ENCODE measurements at regions of chr19 and their contacts with region 1.

Region 1: GRCh38 chr19:24033301-24033962 is 53.6 kb upstream of the ZNF254 start:
- DNase-seq: peak; percentile 84
- ATAC-seq: peak; percentile 98
- H3K4me3 ChIP-seq: peak overlapping the region; percentile 78 to 99 (median 93)
- H3K4me3 Mint-ChIP-seq: peak overlapping the region; percentile 99
- H3K27ac ChIP-seq: peak overlapping the region; percentile 85 to 89
- H3K27ac Mint-ChIP-seq: peak overlapping the region; percentile 98
- H3K4me1 ChIP-seq: peaks cover 24 to 56% of the 10 kb centered on the region in 2 donors
- H3K4me1 Mint-ChIP-seq: peaks cover 35% of the 10 kb centered on the region
- H3K27me3 ChIP-seq: no peaks in the 10 kb centered on the region
- H3K27me3 Mint-ChIP-seq: no peaks in the 10 kb centered on the region
- CTCF ChIP-seq: no peak

Region 2: DNA sequence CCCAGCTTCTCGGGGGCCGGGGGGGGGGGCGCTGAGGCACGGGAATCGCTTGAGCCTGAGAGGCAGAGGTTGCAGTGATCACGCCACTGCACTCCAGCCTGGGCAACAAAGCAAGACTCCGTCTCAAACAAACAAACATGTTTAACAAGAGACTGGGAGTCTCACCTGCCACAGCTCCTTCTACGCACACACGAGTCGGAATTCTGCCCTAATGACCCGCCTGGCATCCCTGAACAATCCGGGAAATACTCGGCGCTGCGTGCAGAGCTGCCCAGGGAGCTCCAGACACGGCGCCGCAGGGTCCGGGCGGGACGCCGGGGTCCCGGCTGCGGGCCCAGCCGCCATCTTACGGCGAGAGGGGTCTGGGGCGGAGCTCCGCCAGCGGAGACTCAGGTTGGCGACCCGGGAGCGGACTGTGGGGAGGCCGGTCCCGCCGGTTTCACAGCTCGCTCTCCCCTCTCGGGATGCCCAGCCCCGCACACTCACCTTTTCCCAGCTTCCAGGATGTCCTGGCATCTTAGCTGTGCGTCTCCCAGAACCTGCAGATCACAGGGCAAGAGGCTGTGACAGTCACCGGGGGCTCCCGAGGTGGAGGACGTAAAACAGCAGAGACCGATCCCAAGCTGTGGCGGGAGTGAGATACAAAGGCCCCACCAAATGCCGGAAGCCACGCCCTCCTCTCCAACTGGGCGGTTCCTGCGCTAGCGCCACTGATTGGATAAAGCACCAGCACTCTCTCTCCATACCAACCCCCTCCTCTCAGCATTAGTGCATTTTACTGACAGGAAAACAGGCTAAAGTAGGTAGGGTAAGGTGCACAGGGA is 759.6 kb before region 1 on chr19:
- CTCF ChIA-PET with region 1: no interaction called
- POLR2A ChIA-PET with region 1: no interaction called
- intact Hi-C with region 1: loop called (anchors 5 kb)
- DNase-seq: peak; percentile 91
- ATAC-seq: peak; percentile 99
- H3K4me3 ChIP-seq: peak overlapping the region; percentile 81 to 99 (median 96)
- H3K4me3 Mint-ChIP-seq: peak overlapping the region; percentile 98
- H3K27ac ChIP-seq: peak overlapping the region; percentile 85 to 89
- H3K27ac Mint-ChIP-seq: peak overlapping the region; percentile 97
- H3K4me1 ChIP-seq: peaks cover 6 to 20% of the 10 kb centered on the region in 2 donors
- H3K4me1 Mint-ChIP-seq: peaks cover 30% of the 10 kb centered on the region
- H3K27me3 ChIP-seq: no peaks in the 10 kb centered on the region
- H3K27me3 Mint-ChIP-seq: no peaks in the 10 kb centered on the region
- CTCF ChIP-seq: no peak

Region 3: GRCh38 chr19:23887642-23888041 is 145.8 kb before region 1 on chr19:
- CTCF ChIA-PET with region 1: no interaction called
- POLR2A ChIA-PET with region 1: no interaction called
- intact Hi-C with region 1: no loop called
- DNase-seq: no peak
- ATAC-seq: no peak
- H3K4me3 ChIP-seq: no peak overlapping the region
- H3K4me3 Mint-ChIP-seq: no peak overlapping the region
- H3K27ac ChIP-seq: no peak overlapping the region
- H3K27ac Mint-ChIP-seq: no peak overlapping the region
- H3K4me1 ChIP-seq: no peaks in the 10 kb centered on the region
- H3K4me1 Mint-ChIP-seq: no peaks in the 10 kb centered on the region
- H3K27me3 ChIP-seq: no peaks in the 10 kb centered on the region
- H3K27me3 Mint-ChIP-seq: no peaks in the 10 kb centered on the region
- CTCF ChIP-seq: no peak

Region 4: DNA sequence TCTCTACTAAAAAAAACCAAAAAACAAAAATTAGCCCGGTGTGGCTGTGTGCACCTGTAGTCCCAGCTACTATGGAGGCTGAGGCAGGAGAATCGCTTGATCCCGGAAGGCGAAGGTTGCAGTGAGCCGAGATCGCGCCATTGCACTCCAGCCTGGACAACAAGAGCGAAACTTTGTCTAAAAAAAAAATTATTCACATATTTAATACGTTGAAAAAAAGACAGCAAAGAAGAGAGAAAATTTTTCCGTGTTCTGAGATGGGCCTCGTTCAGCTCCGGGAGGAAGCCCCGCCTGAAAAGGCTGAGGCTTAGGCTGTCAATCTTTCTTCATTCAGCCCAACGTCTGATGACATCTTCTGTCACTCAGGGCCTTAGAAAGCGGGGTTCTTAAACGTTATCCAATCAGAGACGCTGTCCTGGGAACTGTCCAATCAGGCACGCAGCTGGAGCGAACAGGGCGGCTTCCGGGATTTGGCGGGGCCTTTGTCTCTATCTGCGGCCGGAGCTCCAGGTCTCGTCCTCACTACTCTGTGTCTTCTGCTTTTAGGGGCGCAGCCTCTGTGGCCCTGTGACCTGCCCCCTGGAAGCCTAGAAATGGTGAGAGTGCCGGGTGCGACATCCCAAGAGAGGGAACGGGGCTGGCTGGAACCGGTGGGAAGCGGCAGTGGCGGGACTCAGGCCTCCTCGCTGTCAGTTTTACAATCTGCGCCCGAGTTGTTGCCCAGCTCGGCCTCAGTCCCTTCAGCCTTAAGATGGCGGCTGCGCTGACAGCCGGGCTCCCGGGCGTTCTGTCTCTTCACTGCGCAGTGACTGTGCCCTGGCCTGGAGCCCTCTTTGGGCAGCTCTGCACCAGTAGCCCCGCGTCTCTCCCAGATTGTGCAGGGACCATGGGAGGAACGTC is 118.8 kb before region 1 on chr19 and contains the start of gene ZNF726:
- CTCF ChIA-PET with region 1: no interaction called
- POLR2A ChIA-PET with region 1: interaction called, 11 read pairs
- intact Hi-C with region 1: loop called (anchors 2 kb)
- DNase-seq: peak; percentile 93
- ATAC-seq: peak; percentile 95
- H3K4me3 ChIP-seq: peak within 1 kb of the TSS; percentile 44 to 82 (median 69)
- H3K4me3 Mint-ChIP-seq: peak within 1 kb of the TSS; percentile 95
- H3K27ac ChIP-seq: peak within 1 kb of the TSS; percentile 54 to 78
- H3K27ac Mint-ChIP-seq: peak within 1 kb of the TSS; percentile 86
- H3K4me1 ChIP-seq: peaks cover 0 to 7% of the 10 kb centered on the region in 2 donors
- H3K4me1 Mint-ChIP-seq: peaks cover 11% of the 10 kb centered on the region
- H3K27me3 ChIP-seq: no peaks in the 10 kb centered on the region
- H3K27me3 Mint-ChIP-seq: no peaks in the 10 kb centered on the region
- CTCF ChIP-seq: no peak
- total RNA-seq, gene ZNF726: 5.6 and 8.3 TPM in 2 replicates

Region 5: GRCh38 chr19:23972161-23972560 is 61.3 kb before region 1 on chr19:
- CTCF ChIA-PET with region 1: no interaction called
- POLR2A ChIA-PET with region 1: no interaction called
- intact Hi-C with region 1: no loop called
- DNase-seq: no peak
- ATAC-seq: no peak
- H3K4me3 ChIP-seq: no peak overlapping the region
- H3K4me3 Mint-ChIP-seq: no peak overlapping the region
- H3K27ac ChIP-seq: no peak overlapping the region
- H3K27ac Mint-ChIP-seq: no peak overlapping the region
- H3K4me1 ChIP-seq: no peaks in the 10 kb centered on the region
- H3K4me1 Mint-ChIP-seq: no peaks in the 10 kb centered on the region
- H3K27me3 ChIP-seq: peaks cover 0 to 25% (median 4%) of the 10 kb centered on the region in 4 experiments
- H3K27me3 Mint-ChIP-seq: peaks cover 17% of the 10 kb centered on the region
- CTCF ChIP-seq: no peak

Region 6: GRCh38 chr19:24062190-24062589 is 28.8 kb after region 1 on chr19:
- CTCF ChIA-PET with region 1: no interaction called
- POLR2A ChIA-PET with region 1: no interaction called
- intact Hi-C with region 1: no loop called
- DNase-seq: no peak
- ATAC-seq: no peak
- H3K4me3 ChIP-seq: no peak overlapping the region
- H3K4me3 Mint-ChIP-seq: no peak overlapping the region
- H3K27ac ChIP-seq: no peak overlapping the region
- H3K27ac Mint-ChIP-seq: no peak overlapping the region
- H3K4me1 ChIP-seq: no peaks in the 10 kb centered on the region
- H3K4me1 Mint-ChIP-seq: no peaks in the 10 kb centered on the region
- H3K27me3 ChIP-seq: no peaks in the 10 kb centered on the region
- H3K27me3 Mint-ChIP-seq: no peaks in the 10 kb centered on the region
- CTCF ChIP-seq: no peak

Region 7: GRCh38 chr19:24086974-24087595 is 53.7 kb after region 1 on chr19 and contains the start of gene ZNF254:
- CTCF ChIA-PET with region 1: interaction called, 5 read pairs
- POLR2A ChIA-PET with region 1: no interaction called
- intact Hi-C with region 1: loop called (anchors 2 kb)
- DNase-seq: peak; percentile 89
- ATAC-seq: peak; percentile 99
- H3K4me3 ChIP-seq: peak within 1 kb of the TSS; percentile 61 to 91 (median 74)
- H3K4me3 Mint-ChIP-seq: peak within 1 kb of the TSS; percentile 96
- H3K27ac ChIP-seq: peak within 1 kb of the TSS; percentile 84 to 89
- H3K27ac Mint-ChIP-seq: peak within 1 kb of the TSS; percentile 95
- H3K4me1 ChIP-seq: peaks cover 0 to 14% of the 10 kb centered on the region in 2 donors
- H3K4me1 Mint-ChIP-seq: peaks cover 15% of the 10 kb centered on the region
- H3K27me3 ChIP-seq: no peaks in the 10 kb centered on the region
- H3K27me3 Mint-ChIP-seq: no peaks in the 10 kb centered on the region
- CTCF ChIP-seq: no peak
- total RNA-seq, gene ZNF254: 25.2 and 28.8 TPM in 2 replicates